Left ventricle myocardium inferior (tissue), 1 donor: ENCODE measurements at regions of chr2 and their contacts with region 1.

Region 1: GRCh38 chr2:218395797-218396687 is 3.6 kb upstream of the CTDSP1 start:
- DNase-seq: peak; percentile 93
- H3K4me3 ChIP-seq: peak overlapping the region; percentile 100
- H3K27ac ChIP-seq: peak overlapping the region; percentile 100
- H3K4me1 ChIP-seq: peaks cover 47% of the 10 kb centered on the region
- H3K27me3 ChIP-seq: no peaks in the 10 kb centered on the region
- CTCF ChIP-seq: peak; percentile 95

Region 2: GRCh38 chr2:218292048-218293014 is 103.7 kb before region 1 on chr2 and contains the start of gene TMBIM1:
- intact Hi-C with region 1: loop called (anchors 10 kb)
- DNase-seq: peak; percentile 85
- H3K4me3 ChIP-seq: peak within 1 kb of the TSS; percentile 93
- H3K27ac ChIP-seq: peak within 1 kb of the TSS; percentile 99
- H3K4me1 ChIP-seq: peaks cover 73% of the 10 kb centered on the region
- H3K27me3 ChIP-seq: no peaks in the 10 kb centered on the region
- CTCF ChIP-seq: peak; percentile 96
- total RNA-seq, gene TMBIM1: 111 TPM